IMR-90 (cell line): ENCODE measurements at regions of chrX and their contacts with region 1.

Region 1: DNA sequence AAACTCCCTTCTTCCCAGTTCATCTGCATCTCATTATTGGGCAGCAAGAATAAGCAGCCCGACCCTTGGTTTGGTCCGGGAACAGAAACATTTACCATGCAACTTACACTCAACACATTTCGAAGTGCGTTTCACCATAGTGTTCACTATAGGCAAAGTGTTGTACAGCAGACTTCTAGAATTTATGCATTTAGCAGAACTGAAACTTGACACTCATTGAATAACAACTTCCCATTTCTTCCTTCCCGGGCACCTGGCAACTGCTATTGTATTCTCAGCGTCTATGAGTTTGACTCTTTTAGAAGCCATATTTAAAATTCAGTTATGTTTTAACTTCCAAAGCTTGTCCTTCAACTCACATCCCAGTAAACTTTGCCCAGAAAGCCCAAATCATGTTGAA is 840.6 kb downstream of the NLGN4X start:
- DNase-seq: no peak
- ATAC-seq: no peak
- H3K4me3 ChIP-seq: no peak overlapping the region
- H3K27ac ChIP-seq: no peak overlapping the region
- H3K4me1 ChIP-seq: no peaks in the 10 kb centered on the region
- H3K27me3 ChIP-seq: no peaks in the 10 kb centered on the region
- CTCF ChIP-seq: no peak
- POLR2A ChIP-seq: no peak
- RAD21 ChIP-seq: no peak

Region 2: GRCh38 chrX:4754878-4755604 is 633.0 kb before region 1 on chrX:
- CTCF ChIA-PET with region 1: no interaction called
- POLR2A ChIA-PET with region 1: no interaction called
- dilution Hi-C with region 1: no loop called
- in situ Hi-C with region 1: no loop called
- intact Hi-C with region 1: no loop called
- DNase-seq: no peak
- ATAC-seq: no peak
- H3K4me3 ChIP-seq: no peak overlapping the region
- H3K27ac ChIP-seq: no peak overlapping the region
- H3K4me1 ChIP-seq: no peaks in the 10 kb centered on the region
- H3K27me3 ChIP-seq: no peaks in the 10 kb centered on the region
- CTCF ChIP-seq: no peak
- POLR2A ChIP-seq: no peak
- RAD21 ChIP-seq: no peak

Region 3: GRCh38 chrX:5431823-5432222 is 43.7 kb after region 1 on chrX:
- CTCF ChIA-PET with region 1: no interaction called
- POLR2A ChIA-PET with region 1: no interaction called
- dilution Hi-C with region 1: no loop called
- in situ Hi-C with region 1: no loop called
- intact Hi-C with region 1: loop called (anchors 5 kb)
- DNase-seq: no peak
- ATAC-seq: no peak
- H3K4me3 ChIP-seq: no peak overlapping the region
- H3K27ac ChIP-seq: no peak overlapping the region
- H3K4me1 ChIP-seq: no peaks in the 10 kb centered on the region
- H3K27me3 ChIP-seq: no peaks in the 10 kb centered on the region
- CTCF ChIP-seq: no peak
- POLR2A ChIP-seq: no peak
- RAD21 ChIP-seq: no peak

Region 4: GRCh38 chrX:5617666-5618065 is 229.6 kb after region 1 on chrX:
- CTCF ChIA-PET with region 1: no interaction called
- POLR2A ChIA-PET with region 1: no interaction called
- dilution Hi-C with region 1: no loop called
- in situ Hi-C with region 1: no loop called
- intact Hi-C with region 1: no loop called
- DNase-seq: no peak
- ATAC-seq: no peak
- H3K4me3 ChIP-seq: no peak overlapping the region
- H3K27ac ChIP-seq: no peak overlapping the region
- H3K4me1 ChIP-seq: no peaks in the 10 kb centered on the region
- H3K27me3 ChIP-seq: no peaks in the 10 kb centered on the region
- CTCF ChIP-seq: no peak
- POLR2A ChIP-seq: no peak
- RAD21 ChIP-seq: no peak